Caco-2 (cell line): ENCODE measurements at regions of chr7 and their contacts with region 1.

Region 1: DNA sequence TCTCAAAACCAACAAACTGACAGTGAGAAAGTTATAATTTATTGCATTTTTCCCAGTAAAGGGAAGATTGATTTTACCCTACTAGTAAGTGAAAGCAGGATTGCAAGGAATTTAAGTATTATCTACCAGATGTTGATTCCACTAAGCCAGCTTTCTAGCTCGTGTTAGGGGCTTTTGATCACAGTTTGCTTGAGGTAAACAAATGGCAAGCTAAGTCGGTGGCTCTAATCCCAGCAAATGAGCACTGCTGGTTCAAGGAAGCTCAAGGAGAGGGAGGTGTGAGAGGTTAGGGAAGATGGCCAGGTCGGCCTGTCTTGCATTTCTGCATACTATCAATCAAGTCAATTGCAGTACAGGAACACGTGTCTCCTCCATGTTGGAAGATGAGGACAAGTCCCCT is 448.7 kb upstream of the POM121L12 start:
- DNase-seq: peak; percentile 66 to 71
- H3K4me3 ChIP-seq: no peak overlapping the region
- H3K4me3 Mint-ChIP-seq: no peak overlapping the region
- H3K27ac Mint-ChIP-seq: no peak overlapping the region
- H3K4me1 ChIP-seq: peaks cover 11% of the 10 kb centered on the region
- H3K4me1 Mint-ChIP-seq: peaks cover 7% of the 10 kb centered on the region
- H3K27me3 ChIP-seq: no peaks in the 10 kb centered on the region
- H3K27me3 Mint-ChIP-seq: no peaks in the 10 kb centered on the region
- CTCF ChIP-seq: no peak

Region 2: DNA sequence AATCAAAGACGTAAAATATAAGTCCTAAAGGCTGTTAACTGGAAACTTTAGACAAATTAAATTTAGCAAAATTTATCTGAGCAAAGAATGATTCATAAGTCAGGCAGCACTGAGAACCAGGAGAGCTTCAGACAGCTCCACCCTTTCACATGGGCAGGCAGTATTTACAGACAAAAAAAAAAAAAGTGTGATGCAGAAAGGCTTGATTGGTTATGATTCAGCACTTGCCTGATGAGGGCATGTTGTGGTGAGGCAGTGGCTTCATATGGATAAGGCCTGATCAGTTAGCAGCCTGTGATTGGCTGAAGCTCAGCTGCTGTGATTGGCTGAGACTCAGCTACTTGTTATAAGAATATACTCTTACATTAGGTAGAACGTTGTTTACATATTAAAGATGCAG is 46.7 kb before region 1 on chr7:
- CTCF ChIA-PET with region 1: no interaction called
- POLR2A ChIA-PET with region 1: no interaction called
- intact Hi-C with region 1: loop called (anchors 1 kb)
- DNase-seq: no peak
- H3K4me3 ChIP-seq: no peak overlapping the region
- H3K4me3 Mint-ChIP-seq: no peak overlapping the region
- H3K27ac Mint-ChIP-seq: no peak overlapping the region
- H3K4me1 ChIP-seq: peaks cover 34% of the 10 kb centered on the region
- H3K4me1 Mint-ChIP-seq: peaks cover 13% of the 10 kb centered on the region
- H3K27me3 ChIP-seq: no peaks in the 10 kb centered on the region
- H3K27me3 Mint-ChIP-seq: no peaks in the 10 kb centered on the region
- CTCF ChIP-seq: no peak

Region 3: DNA sequence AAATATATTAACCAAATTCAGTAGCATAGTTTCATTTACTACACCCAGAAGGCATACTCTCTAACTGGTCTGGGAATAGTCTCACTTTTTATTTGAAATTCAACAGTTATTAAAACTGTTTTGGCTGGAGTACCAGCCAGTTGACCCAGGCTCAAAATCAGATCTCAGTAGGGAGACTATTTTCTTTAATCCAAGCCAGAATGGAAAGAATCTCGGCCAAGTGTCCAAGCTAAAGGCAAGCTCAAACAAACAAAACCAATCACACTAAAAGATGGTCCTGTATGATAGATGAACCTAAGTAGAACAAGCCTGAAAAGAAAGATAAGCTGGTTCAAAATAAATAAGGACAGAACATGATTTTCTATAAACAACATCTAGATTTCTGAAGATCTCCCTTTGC is 189.2 kb after region 1 on chr7:
- CTCF ChIA-PET with region 1: no interaction called
- POLR2A ChIA-PET with region 1: no interaction called
- intact Hi-C with region 1: no loop called
- DNase-seq: no peak
- H3K4me3 ChIP-seq: no peak overlapping the region
- H3K4me3 Mint-ChIP-seq: no peak overlapping the region
- H3K27ac Mint-ChIP-seq: no peak overlapping the region
- H3K4me1 ChIP-seq: no peaks in the 10 kb centered on the region
- H3K4me1 Mint-ChIP-seq: no peaks in the 10 kb centered on the region
- H3K27me3 ChIP-seq: no peaks in the 10 kb centered on the region
- H3K27me3 Mint-ChIP-seq: no peaks in the 10 kb centered on the region
- CTCF ChIP-seq: no peak